ENCODE measurements at regions of chr6 and their contacts with region 1.

Region 1: GRCh38 chr6:27503436-27504030 is 30.6 kb upstream of the ZNF184 start:
- DNase-seq: peak; percentile 82
- ATAC-seq: peak; percentile 60
- H3K4me3 ChIP-seq: peak overlapping the region; percentile 78 to 87 (median 79)
- H3K27ac ChIP-seq: peak overlapping the region; percentile 37
- H3K4me1 ChIP-seq: peaks cover 46% of the 10 kb centered on the region
- H3K27me3 ChIP-seq: peaks cover 0 to 4% of the 10 kb centered on the region in 2 experiments; a peak in 2 of 5 replicates
- CTCF ChIP-seq: no peak
- EP300 ChIP-seq: no peak
- POLR2A ChIP-seq: no peak
- RAD21 ChIP-seq: no peak

Region 2: DNA sequence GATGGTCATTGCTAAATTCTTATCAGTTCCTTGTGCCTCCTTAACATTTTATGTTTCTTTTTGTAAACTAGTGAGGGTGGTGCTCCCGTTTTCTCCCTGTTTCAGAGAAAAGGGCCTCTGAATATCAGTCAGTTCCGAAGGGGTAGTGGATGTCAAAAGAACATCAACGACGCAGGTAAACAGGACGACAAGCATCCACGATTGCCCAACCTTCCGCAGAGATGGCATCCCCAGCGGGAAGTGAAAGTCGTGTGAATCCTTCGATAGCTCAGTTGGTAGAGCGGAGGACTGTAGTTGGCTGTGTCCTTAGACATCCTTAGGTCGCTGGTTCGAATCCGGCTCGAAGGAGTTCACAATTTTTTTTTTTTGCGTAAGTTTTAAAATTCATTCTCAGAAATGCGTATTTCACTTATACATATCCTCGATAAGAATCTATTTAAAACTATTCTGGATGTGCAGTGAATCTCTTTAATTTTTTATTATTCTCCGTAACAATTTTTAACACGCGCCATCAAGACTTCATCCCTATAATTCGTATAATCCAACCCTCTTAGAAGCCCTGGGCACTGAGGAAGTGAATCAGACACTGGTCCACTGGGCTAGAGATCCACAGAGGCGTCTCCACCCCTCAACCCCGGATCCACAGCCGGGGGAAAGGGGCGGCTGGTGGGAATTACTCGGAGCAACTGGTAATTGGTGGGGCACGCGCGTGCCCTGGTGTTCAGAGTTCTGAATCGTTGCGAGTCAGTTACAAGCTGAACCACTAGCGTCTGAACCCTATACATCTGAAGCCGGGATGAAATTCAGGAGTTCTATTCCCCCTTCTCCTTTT is 934.7 kb before region 1 on chr6:
- CTCF ChIA-PET with region 1: no interaction called
- POLR2A ChIA-PET with region 1: no interaction called
- in situ Hi-C with region 1: no loop called
- intact Hi-C with region 1: loop called (anchors 5 kb)
- DNase-seq: peak; percentile 95
- ATAC-seq: peak; percentile 35
- H3K4me3 ChIP-seq: peak overlapping the region; percentile 55 to 85 (median 78)
- H3K27ac ChIP-seq: peak overlapping the region; percentile 7
- H3K4me1 ChIP-seq: peaks cover 61% of the 10 kb centered on the region
- H3K27me3 ChIP-seq: no peaks in the 10 kb centered on the region; a peak in 1 of 5 replicates
- CTCF ChIP-seq: peak; percentile 5; the same call in 1 of the 2 replicates
- EP300 ChIP-seq: 0 out of 4 replicates have a peak, but pooled peaks of 1 of the 2 experiments have one; percentile 5
- POLR2A ChIP-seq: no peak
- RAD21 ChIP-seq: no peak

Region 3: GRCh38 chr6:27312146-27312949 is 191.2 kb before region 1 on chr6 and contains the start of gene POM121L2:
- CTCF ChIA-PET with region 1: no interaction called
- POLR2A ChIA-PET with region 1: no interaction called
- in situ Hi-C with region 1: no loop called
- intact Hi-C with region 1: loop called (anchors 5 kb)
- DNase-seq: peak; percentile 71
- ATAC-seq: peak; percentile 87
- H3K4me3 ChIP-seq: peak within 1 kb of the TSS; percentile 34 to 70 (median 60); a peak in 5 of 6 replicates
- H3K27ac ChIP-seq: no peak within 1 kb of the TSS
- H3K4me1 ChIP-seq: peaks cover 12% of the 10 kb centered on the region
- H3K27me3 ChIP-seq: peaks cover 2 to 22% of the 10 kb centered on the region in 2 experiments; a peak in 2 of 5 replicates
- CTCF ChIP-seq: peak; percentile 97
- EP300 ChIP-seq: no peak
- POLR2A ChIP-seq: no peak
- RAD21 ChIP-seq: peak; percentile 89
- total RNA-seq, gene POM121L2: not detected in 2 replicates

Region 4: DNA sequence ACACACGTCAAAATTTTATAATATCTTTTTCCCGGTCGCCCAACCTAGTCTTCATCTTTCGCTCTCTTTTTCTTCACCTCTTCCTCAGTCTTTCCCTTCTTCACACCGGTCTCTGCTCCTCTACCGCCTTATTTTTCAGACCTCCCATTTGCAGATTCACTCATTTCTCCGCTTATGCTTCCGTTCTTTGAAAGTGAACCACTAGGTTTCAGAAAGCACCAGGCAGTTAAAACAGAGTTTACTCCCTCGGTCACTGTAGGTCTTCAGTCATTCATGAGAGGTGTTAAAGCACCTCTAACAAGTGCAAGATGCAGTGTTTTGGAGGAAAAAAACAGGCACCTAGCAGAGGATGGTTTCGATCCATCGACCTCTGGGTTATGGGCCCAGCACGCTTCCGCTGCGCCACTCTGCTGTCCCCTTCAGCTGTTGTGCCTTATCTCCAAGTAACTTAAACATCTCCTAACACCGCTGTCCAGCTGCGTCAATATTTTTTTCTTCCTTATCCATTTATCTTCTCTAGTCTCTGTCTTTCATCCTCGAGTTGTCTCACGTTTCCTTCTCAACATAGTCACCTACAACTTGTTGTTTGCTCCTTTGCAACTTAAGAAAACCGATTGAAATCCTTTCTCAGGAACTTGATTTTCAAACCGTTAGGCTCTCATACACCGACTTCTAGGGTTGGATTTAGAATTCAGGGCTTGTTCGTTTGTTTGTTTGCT is 89.1 kb after region 1 on chr6:
- CTCF ChIA-PET with region 1: no interaction called
- POLR2A ChIA-PET with region 1: no interaction called
- in situ Hi-C with region 1: no loop called
- intact Hi-C with region 1: loop called (anchors 5 kb)
- DNase-seq: peak; percentile 84
- ATAC-seq: peak; percentile 96
- H3K4me3 ChIP-seq: peak overlapping the region; percentile 58 to 76 (median 74)
- H3K27ac ChIP-seq: no peak overlapping the region
- H3K4me1 ChIP-seq: peaks cover 37% of the 10 kb centered on the region
- H3K27me3 ChIP-seq: peaks cover 0 to 22% of the 10 kb centered on the region in 2 experiments; a peak in 1 of 5 replicates
- CTCF ChIP-seq: no peak
- EP300 ChIP-seq: 0 out of 4 replicates have a peak, but pooled peaks of 1 of the 2 experiments have one; percentile 29
- POLR2A ChIP-seq: no peak
- RAD21 ChIP-seq: no peak

Region 5: GRCh38 chr6:27753668-27754407 is 250.3 kb after region 1 on chr6:
- CTCF ChIA-PET with region 1: no interaction called
- POLR2A ChIA-PET with region 1: no interaction called
- in situ Hi-C with region 1: no loop called
- intact Hi-C with region 1: loop called (anchors 5 kb)
- DNase-seq: peak; percentile 83
- ATAC-seq: peak; percentile 76
- H3K4me3 ChIP-seq: peak overlapping the region; percentile 63 to 88 (median 78)
- H3K27ac ChIP-seq: no peak overlapping the region
- H3K4me1 ChIP-seq: peaks cover 21% of the 10 kb centered on the region
- H3K27me3 ChIP-seq: peaks cover 0 to 3% of the 10 kb centered on the region in 2 experiments; a peak in 1 of 5 replicates
- CTCF ChIP-seq: no peak
- EP300 ChIP-seq: no peak
- POLR2A ChIP-seq: no peak
- RAD21 ChIP-seq: no peak

Measured in HepG2 (cell line).